ENCODE measurements at regions of chr3 and their contacts with region 1.

Region 1: DNA sequence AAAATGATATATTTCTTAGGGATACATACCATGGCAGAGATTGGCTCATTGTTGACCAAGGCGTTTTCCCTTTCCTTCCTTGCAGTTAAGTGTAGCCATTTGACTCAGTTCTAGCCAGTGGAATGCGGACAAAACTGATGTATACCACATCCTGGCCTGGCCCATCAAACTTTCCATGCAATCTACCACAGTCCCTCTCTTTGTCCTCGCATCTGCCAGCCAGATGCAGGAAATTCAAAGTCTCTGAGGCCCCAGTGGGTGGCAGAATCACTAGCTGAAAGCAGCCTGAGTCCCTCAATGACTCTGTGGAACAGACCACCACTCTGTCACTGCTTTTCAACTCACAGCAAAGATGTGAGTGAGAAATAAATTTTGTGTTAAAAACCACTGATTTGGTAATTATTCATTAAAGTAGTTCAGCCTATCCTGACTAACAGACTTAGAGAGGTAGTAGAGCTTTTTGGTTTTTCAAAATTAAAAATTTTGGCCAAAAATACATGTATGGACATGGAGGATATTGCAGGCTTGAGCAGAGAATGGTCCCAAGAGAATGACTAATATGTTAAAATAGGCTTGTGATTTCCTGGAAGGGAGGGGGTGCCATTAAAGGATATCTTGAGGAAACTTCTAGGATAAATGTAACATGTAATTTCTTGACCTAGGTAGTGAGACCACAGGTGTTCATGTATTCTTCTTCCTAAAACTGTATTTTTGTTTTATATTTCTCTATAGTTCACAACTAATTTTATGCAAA is 10.9 kb downstream of the LRRFIP2 start:
- DNase-seq: peak; percentile 72
- H3K4me3 Mint-ChIP-seq: no peak overlapping the region
- H3K27ac Mint-ChIP-seq: peak overlapping the region; percentile 42
- H3K4me1 Mint-ChIP-seq: peaks cover 29% of the 10 kb centered on the region
- H3K27me3 Mint-ChIP-seq: no peaks in the 10 kb centered on the region

Region 2: DNA sequence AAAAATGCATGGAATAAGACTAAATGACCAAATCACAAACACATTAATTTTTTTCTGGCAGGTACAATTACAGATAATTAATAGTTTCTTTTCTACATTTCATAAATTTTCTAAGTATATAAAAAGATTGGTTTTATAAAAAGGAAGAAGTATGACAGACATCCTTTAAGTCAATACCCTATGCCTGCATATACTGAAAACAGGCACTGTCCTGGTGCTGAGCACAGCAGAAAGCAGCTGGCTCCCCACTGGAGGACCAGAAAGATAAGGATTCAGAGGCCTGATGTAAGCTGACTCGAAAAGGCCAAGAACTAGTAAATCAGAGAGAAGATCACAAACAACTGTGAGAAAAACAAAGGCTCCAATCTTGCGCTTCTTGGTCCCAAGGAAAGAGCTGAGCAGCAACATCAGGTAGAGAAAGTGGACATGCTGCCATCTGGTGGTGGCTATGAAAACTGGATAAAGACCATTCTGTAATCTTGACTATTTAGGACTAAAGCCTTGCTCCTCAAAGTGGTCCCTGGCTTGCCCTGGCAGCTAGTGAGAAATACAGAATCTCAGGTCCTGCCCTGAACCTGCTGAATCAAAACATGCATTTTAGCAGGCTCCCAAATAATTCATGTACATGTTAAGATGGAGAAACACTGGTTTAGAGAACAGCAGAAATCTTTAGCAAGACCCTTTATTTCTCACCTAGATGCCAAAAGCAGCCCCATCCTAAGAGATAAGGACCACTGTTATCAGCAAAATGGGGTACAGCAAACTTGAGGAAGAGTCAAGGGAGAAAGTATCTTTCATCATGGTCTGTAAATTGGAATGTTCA is 294.6 kb before region 1 on chr3:
- CTCF ChIA-PET with region 1: no interaction called
- POLR2A ChIA-PET with region 1: no interaction called
- intact Hi-C with region 1: no loop called
- DNase-seq: peak; percentile 60
- H3K4me3 Mint-ChIP-seq: no peak overlapping the region
- H3K27ac Mint-ChIP-seq: no peak overlapping the region
- H3K4me1 Mint-ChIP-seq: peaks cover 23% of the 10 kb centered on the region
- H3K27me3 Mint-ChIP-seq: no peaks in the 10 kb centered on the region

Region 3: GRCh38 chr3:37114251-37115145 is 48.9 kb before region 1 on chr3:
- CTCF ChIA-PET with region 1: no interaction called
- POLR2A ChIA-PET with region 1: interaction called, 12 read pairs
- intact Hi-C with region 1: loop called (anchors 2 kb)
- DNase-seq: no peak
- H3K4me3 Mint-ChIP-seq: no peak overlapping the region
- H3K27ac Mint-ChIP-seq: no peak overlapping the region
- H3K4me1 Mint-ChIP-seq: peaks cover 19% of the 10 kb centered on the region
- H3K27me3 Mint-ChIP-seq: no peaks in the 10 kb centered on the region

Region 4: GRCh38 chr3:37139567-37140052 is 23.8 kb before region 1 on chr3:
- CTCF ChIA-PET with region 1: no interaction called
- POLR2A ChIA-PET with region 1: interaction called, 13 read pairs
- intact Hi-C with region 1: no loop called
- DNase-seq: no peak
- H3K4me3 Mint-ChIP-seq: no peak overlapping the region
- H3K27ac Mint-ChIP-seq: no peak overlapping the region
- H3K4me1 Mint-ChIP-seq: peaks cover 17% of the 10 kb centered on the region
- H3K27me3 Mint-ChIP-seq: no peaks in the 10 kb centered on the region

Region 5: DNA sequence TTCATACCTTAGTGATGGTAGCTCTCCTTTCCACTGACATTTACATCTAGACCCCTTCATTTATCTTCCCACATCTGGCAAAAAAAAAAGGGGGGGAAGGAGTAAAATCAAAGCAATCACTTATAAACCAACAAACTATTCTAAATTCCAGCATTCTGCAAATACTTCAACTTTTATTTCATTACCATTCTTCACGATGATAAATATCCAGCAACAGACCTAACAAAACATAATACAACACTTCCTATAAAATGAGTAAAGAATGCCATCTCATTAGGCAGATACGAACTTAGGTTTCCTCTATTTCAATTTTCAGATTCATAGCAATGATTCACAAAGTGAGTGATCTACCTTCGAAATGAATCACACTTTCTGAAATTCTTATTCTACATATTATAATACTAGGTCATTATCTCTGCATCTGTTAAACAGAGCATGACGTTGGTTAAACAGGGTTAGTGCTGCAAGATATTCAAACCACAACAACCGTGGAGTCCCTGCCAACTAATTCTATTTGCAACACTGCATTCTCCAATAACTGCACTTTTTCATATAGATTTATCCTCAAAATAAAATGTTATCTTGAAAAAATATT is 11.2 kb after region 1 on chr3 and contains the start of gene LRRFIP2:
- CTCF ChIA-PET with region 1: interaction called, 3 read pairs
- POLR2A ChIA-PET with region 1: interaction called, 3 read pairs
- intact Hi-C with region 1: loop called (anchors 1 kb)
- DNase-seq: peak; percentile 41
- H3K4me3 Mint-ChIP-seq: peak within 1 kb of the TSS; percentile 83
- H3K27ac Mint-ChIP-seq: peak within 1 kb of the TSS; percentile 80
- H3K4me1 Mint-ChIP-seq: peaks cover 41% of the 10 kb centered on the region
- H3K27me3 Mint-ChIP-seq: no peaks in the 10 kb centered on the region
- total RNA-seq, gene LRRFIP2: 25.9 to 30.7 TPM